Kidney (tissue), 22 donors: ENCODE measurements at regions of chr1 and their contacts with region 1.

Region 1: GRCh38 chr1:62407405-62408009 is 29.3 kb upstream of the USP1 start:
- DNase-seq: peak in 2 of 5 donors; percentile 78 to 86
- H3K4me3 ChIP-seq: no peak overlapping the region
- H3K27ac ChIP-seq: no peak overlapping the region
- H3K4me1 ChIP-seq: no peaks in the 10 kb centered on the region
- H3K27me3 ChIP-seq: no peaks in the 10 kb centered on the region
- CTCF ChIP-seq: peak; percentile 65

Region 2: GRCh38 chr1:62126579-62127305 is 280.8 kb before region 1 on chr1:
- intact Hi-C with region 1: no loop called
- DNase-seq: no peak
- H3K4me3 ChIP-seq: no peak overlapping the region
- H3K27ac ChIP-seq: no peak overlapping the region
- H3K4me1 ChIP-seq: no peaks in the 10 kb centered on the region
- H3K27me3 ChIP-seq: no peaks in the 10 kb centered on the region
- CTCF ChIP-seq: no peak

Region 3: DNA sequence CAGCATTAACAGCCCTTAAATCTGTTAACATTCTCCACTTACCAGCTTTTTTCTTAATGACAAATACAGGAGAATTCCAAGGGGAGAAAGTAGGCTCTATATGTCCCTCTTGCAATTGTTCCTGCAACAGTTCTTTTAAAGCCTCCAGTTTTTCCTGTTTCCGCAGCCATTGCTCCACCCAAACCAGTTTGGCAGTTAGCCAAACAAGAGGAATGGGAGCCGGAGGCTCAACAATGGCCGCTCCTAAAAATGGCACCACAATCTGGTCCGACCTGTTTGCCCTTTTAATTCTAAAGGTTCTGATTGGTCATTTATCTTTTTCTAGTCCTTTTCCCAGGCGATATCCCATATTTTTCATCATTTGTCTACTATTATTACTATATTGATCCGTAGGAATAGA is 226.9 kb before region 1 on chr1:
- intact Hi-C with region 1: loop called (anchors 5 kb)
- DNase-seq: peak in 4 of 5 donors; percentile 49 to 71 (median 61)
- H3K4me3 ChIP-seq: no peak overlapping the region
- H3K27ac ChIP-seq: no peak overlapping the region
- H3K4me1 ChIP-seq: no peaks in the 10 kb centered on the region
- H3K27me3 ChIP-seq: no peaks in the 10 kb centered on the region
- CTCF ChIP-seq: no peak